Dorsolateral prefrontal cortex (tissue), 120 donors: ENCODE measurements at regions of chr2 and their contacts with region 1.

Region 1: GRCh38 chr2:200367199-200367598 is 60.7 kb downstream of the SPATS2L start:
- DNase-seq: no peak
- H3K4me3 ChIP-seq: peak overlapping the region in 1 of 59 donors; percentile 2
- H3K27ac ChIP-seq: peak overlapping the region in 6 of 59 donors; percentile 1 to 58 (median 20)
- H3K27me3 ChIP-seq: no peaks in the 10 kb centered on the region
- CTCF ChIP-seq: no peak

Region 2: GRCh38 chr2:200329798-200330197 is 37.4 kb before region 1 on chr2:
- intact Hi-C with region 1: loop called in 1 of 2 experiments (anchors 5 kb)
- DNase-seq: no peak
- H3K4me3 ChIP-seq: no peak overlapping the region
- H3K27ac ChIP-seq: peak overlapping the region in 24 of 59 donors; percentile 1 to 63 (median 24)
- H3K27me3 ChIP-seq: no peaks in the 10 kb centered on the region
- CTCF ChIP-seq: no peak